ENCODE measurements at regions of chr1 and their contacts with region 1.

Region 1: GRCh38 chr1:17531682-17532487 is 7.6 kb upstream of the ARHGEF10L start:
- DNase-seq: peak; percentile 97
- H3K4me3 ChIP-seq: no peak overlapping the region
- H3K27ac ChIP-seq: peak overlapping the region; percentile 84 to 97 (median 87)
- H3K4me1 ChIP-seq: peaks cover 0 to 65% (median 56%) of the 10 kb centered on the region in 4 donors
- H3K27me3 ChIP-seq: no peaks in the 10 kb centered on the region
- CTCF ChIP-seq: no peak
- EP300 ChIP-seq: peak in 2 of 4 donors; percentile 48 to 49
- POLR2A ChIP-seq: no peak

Region 2: DNA sequence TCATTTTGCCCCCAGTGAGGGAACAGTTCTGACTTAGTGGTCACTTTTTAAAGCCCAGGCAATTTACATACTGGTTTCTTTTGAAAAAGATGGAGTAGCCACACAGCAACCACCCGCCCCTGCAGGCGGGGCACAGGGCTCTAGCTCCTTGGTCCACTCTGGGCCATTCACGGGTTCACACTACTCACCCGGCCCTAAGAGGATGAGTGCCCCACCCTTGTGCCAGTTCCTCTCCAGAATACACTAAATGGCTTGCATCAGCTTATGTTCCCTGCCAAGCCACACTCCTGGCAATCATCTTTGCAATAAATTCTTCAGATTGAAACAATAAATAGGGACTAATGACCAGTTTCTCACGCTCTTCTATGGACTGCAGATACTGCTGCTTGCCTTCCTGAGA is 504.5 kb before region 1 on chr1:
- intact Hi-C with region 1: no loop called
- DNase-seq: peak; percentile 40
- H3K4me3 ChIP-seq: no peak overlapping the region
- H3K27ac ChIP-seq: no peak overlapping the region
- H3K4me1 ChIP-seq: peaks cover 0 to 15% (median 0%) of the 10 kb centered on the region in 4 donors
- H3K27me3 ChIP-seq: no peaks in the 10 kb centered on the region
- CTCF ChIP-seq: no peak
- EP300 ChIP-seq: no peak
- POLR2A ChIP-seq: no peak

Region 3: DNA sequence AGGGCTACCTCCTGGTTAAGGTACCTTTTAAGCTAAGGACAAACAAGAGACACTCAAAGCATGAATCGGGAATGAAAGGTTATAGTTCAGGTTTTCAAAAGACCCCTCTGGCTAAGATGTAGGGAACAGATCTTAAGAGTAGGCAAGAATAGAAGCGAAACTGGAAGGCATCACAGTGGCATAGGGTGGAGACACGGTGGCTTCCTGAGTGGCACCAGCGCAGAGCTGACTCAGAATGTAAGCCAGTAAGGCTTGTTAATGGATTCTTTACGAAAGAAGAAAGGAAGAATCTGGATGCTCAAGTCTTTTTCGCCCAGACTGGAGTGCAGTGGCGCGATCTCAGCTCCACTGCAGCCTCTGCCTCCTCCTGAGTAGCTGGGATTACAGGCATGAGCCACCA is 138.7 kb before region 1 on chr1:
- intact Hi-C with region 1: no loop called
- DNase-seq: no peak
- H3K4me3 ChIP-seq: no peak overlapping the region
- H3K27ac ChIP-seq: no peak overlapping the region
- H3K4me1 ChIP-seq: no peaks in the 10 kb centered on the region
- H3K27me3 ChIP-seq: no peaks in the 10 kb centered on the region
- CTCF ChIP-seq: no peak
- EP300 ChIP-seq: no peak
- POLR2A ChIP-seq: no peak

Region 4: DNA sequence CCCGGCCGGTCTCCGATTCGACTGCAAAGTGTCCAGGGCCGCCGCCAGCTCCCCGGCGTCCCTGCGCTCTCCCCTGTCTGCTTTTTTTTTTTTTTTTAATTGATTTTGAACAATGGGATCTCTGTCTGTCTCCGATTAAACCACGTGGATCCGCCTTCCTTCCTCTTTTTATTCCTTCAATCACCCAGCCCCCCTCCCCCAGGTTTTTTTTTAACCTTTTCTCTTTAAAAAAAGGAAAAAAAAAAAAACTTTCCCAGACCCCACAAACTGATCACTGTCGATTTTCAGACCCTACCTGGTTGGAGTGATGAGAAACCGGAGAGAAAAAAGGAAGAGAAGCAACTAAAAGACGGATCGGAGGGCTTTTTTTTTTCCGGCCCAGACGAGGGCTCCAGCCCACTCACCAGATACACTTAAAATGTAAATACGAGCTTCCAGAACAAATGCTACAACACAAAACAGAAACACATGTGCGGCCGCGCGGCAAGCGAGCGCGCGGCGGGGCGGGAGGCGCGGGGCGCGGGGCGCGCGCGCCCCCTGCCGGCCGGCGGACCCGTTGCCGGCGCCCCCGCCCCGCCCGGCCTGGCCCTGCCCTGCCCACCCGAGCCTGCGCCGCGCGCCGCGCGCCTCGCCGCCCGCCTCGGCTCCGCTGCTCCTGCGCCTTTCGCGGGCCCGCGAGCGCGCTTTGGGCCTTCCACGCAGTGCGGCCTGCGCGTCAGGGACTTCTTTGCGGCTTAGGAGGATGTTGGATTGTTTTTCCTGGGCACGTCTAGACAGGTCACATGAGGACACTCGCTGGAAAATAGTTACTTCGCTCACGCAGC is 92.4 kb before region 1 on chr1 and contains the start of gene RCC2:
- intact Hi-C with region 1: loop called (anchors 5 kb)
- DNase-seq: peak; percentile 81
- H3K4me3 ChIP-seq: peak within 1 kb of the TSS; percentile 60 to 77 (median 66)
- H3K27ac ChIP-seq: peak within 1 kb of the TSS; percentile 80 to 94 (median 88)
- H3K4me1 ChIP-seq: peaks cover 0 to 39% (median 29%) of the 10 kb centered on the region in 4 donors
- H3K27me3 ChIP-seq: no peaks in the 10 kb centered on the region
- CTCF ChIP-seq: no peak
- EP300 ChIP-seq: no peak
- POLR2A ChIP-seq: no peak
- total RNA-seq, gene RCC2: 12.8 to 21.9 (median 17.8) TPM

Region 5: DNA sequence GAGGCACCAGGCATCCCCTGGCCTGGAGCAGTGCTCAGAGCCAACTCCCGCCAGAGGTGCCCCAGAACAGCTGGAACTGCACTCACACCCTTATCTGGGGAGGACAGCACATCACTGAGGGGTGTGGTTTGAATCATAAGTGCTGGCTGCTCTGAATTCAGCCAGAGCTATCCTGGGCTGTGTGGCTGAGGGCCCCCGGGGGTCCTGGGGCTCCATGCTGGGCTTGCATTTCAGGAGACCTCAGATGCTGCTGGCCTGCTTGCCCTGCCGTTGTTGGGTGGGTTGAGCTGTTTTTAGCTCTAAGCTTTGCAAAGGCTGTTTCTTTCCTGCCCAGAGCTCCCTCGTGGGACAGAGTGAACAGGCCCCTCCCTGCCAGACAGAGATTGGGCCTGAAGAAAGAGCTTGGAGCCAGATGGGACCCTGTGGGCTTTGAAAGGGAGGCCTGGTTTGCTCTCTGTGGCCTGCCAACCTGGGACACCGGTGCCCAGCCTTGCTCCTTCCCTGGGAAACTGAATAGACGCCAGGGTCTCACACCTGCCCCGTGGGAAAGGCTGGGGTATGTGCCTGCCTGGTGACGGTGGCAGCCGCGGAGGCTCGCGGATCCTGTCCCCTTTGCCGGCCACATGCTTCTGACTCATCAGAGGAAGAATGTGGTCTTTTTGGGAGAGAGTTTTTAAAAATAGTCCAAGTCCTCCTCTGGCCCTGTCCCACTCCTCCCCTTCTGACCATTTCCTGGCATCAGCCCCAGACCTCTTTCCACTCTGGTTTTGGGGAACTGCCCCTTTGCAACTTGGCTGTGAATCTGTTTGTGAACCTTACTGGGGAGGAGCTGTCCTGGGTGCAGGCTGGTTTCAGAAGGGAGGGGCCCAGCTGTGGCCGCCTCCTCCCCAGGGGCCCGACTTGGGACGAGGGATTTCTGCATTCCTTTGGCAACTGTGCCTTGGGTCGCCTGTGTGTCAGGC is 37.6 kb after region 1 on chr1:
- intact Hi-C with region 1: loop called (anchors 5 kb)
- DNase-seq: peak; percentile 95
- H3K4me3 ChIP-seq: peak overlapping the region in 1 of 4 donors; percentile 10
- H3K27ac ChIP-seq: peak overlapping the region; percentile 75 to 97 (median 92)
- H3K4me1 ChIP-seq: peaks cover 0 to 100% (median 98%) of the 10 kb centered on the region in 4 donors
- H3K27me3 ChIP-seq: no peaks in the 10 kb centered on the region
- CTCF ChIP-seq: no peak
- EP300 ChIP-seq: peak in 1 of 4 donors; percentile 96
- POLR2A ChIP-seq: no peak

Measured in sigmoid colon (tissue), 7 donors.